ENCODE measurements at regions of chr3 and their contacts with region 1.

Region 1: DNA sequence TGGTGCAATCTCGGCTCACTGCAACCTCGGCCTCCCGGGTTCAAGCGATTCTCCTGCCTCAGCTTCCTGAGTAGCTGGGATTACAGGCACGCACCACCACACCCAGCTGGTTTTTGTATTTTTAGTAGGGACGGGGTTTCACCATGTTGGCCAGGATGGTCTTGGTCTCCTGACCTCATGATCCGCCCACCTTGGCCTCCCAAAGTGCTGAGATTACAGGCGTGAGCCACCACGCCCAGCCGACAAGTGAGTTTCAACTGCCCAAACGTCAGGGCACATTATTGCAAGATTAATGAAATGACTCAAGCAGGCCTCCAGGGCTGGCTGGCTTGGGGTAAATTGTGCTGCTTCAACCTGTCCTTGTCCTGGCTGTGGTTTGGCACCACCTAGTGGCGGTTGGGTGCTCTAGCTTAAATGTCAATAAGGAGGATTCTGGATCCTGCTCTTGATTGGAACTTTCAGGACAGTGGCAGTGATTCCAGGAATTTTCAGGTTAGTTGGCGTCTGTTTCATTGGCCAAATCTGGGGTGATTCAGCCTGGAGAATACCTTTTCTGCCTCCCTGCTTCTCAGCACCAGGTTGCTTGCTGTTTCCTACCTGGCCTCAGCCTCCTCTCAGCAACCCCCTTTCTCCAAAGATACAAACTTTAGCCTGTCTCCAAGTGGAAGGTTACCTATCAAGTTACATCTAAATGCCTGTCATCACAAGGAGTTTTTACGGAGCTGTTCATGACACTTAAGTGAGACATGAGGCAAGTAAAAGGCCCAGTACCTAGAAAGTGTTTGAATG is 32.4 kb upstream of the SACM1L start:
- DNase-seq: peak; percentile 85 to 95
- ATAC-seq: peak; percentile 78 to 82
- H3K4me3 ChIP-seq: no peak overlapping the region
- H3K27ac ChIP-seq: peak overlapping the region; percentile 71 to 82 (median 78)
- H3K4me1 ChIP-seq: peaks cover 44 to 48% of the 10 kb centered on the region in 2 donors
- H3K27me3 ChIP-seq: no peaks in the 10 kb centered on the region
- CTCF ChIP-seq: peak; percentile 96 to 97 (median 97)
- POLR2A ChIP-seq: no peak

Region 2: GRCh38 chr3:45224824-45225464 is 431.8 kb before region 1 on chr3:
- in situ Hi-C with region 1: loop called in 2 of 4 experiments (anchors 25 kb)
- intact Hi-C with region 1: loop called (anchors 10 kb)
- DNase-seq: peak; percentile 59 to 69
- ATAC-seq: peak; percentile 79 to 83
- H3K4me3 ChIP-seq: peak overlapping the region; percentile 36 to 60 (median 49)
- H3K27ac ChIP-seq: no peak overlapping the region
- H3K4me1 ChIP-seq: peaks cover 3 to 11% of the 10 kb centered on the region in 2 donors
- H3K27me3 ChIP-seq: peaks cover 0 to 4% (median 0%) of the 10 kb centered on the region in 3 donors
- CTCF ChIP-seq: peak; percentile 40 to 70 (median 51)
- POLR2A ChIP-seq: no peak

Region 3: GRCh38 chr3:45507820-45508317 is 148.9 kb before region 1 on chr3:
- in situ Hi-C with region 1: loop called (anchors 5 kb)
- intact Hi-C with region 1: loop called (anchors 1 kb)
- DNase-seq: peak in 1 of 2 donors; percentile 30
- ATAC-seq: peak in 1 of 2 donors; percentile 34
- H3K4me3 ChIP-seq: no peak overlapping the region
- H3K27ac ChIP-seq: peak overlapping the region in 2 of 4 donors; percentile 8 to 13
- H3K4me1 ChIP-seq: no peaks in the 10 kb centered on the region
- H3K27me3 ChIP-seq: no peaks in the 10 kb centered on the region
- CTCF ChIP-seq: peak in 4 of 5 experiments; percentile 3 to 46 (median 20)
- POLR2A ChIP-seq: no peak

Region 4: GRCh38 chr3:45599984-45600650 is 56.7 kb before region 1 on chr3:
- in situ Hi-C with region 1: loop called in 2 of 4 experiments (anchors 5 to 10 kb)
- intact Hi-C with region 1: no loop called
- DNase-seq: no peak
- ATAC-seq: no peak
- H3K4me3 ChIP-seq: no peak overlapping the region
- H3K27ac ChIP-seq: peak overlapping the region; percentile 90 to 99 (median 95)
- H3K4me1 ChIP-seq: peaks cover 87 to 100% of the 10 kb centered on the region in 2 donors
- H3K27me3 ChIP-seq: no peaks in the 10 kb centered on the region
- CTCF ChIP-seq: no peak
- POLR2A ChIP-seq: no peak